ENCODE measurements at regions of chr6 and their contacts with region 1.

Region 1: DNA sequence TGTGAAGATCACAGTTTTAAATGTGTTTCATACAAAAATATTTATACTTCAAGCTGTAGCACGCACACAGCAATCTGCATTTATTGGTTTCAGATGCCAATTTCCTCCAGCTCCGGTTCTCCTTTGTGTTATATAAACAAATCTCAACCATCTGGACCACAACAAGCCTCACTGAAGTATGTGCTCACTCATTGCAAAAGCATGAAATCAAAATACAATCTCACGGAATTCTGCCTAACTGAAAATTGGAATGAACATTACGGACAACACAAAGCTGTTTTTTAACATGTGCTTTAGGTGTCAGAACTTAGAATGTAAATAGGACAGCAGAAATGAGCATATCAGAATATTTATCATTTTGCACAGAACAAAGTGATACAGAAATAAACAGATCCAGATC is 38.0 kb downstream of the RCAN2 start:
- DNase-seq: no peak
- ATAC-seq: no peak
- H3K4me3 ChIP-seq: no peak overlapping the region
- H3K4me3 Mint-ChIP-seq: no peak overlapping the region
- H3K27ac ChIP-seq: no peak overlapping the region
- H3K27ac Mint-ChIP-seq: no peak overlapping the region
- H3K4me1 ChIP-seq: no peaks in the 10 kb centered on the region
- H3K4me1 Mint-ChIP-seq: no peaks in the 10 kb centered on the region
- H3K27me3 ChIP-seq: no peaks in the 10 kb centered on the region
- H3K27me3 Mint-ChIP-seq: peaks cover 16% of the 10 kb centered on the region
- CTCF ChIP-seq: no peak

Region 2: DNA sequence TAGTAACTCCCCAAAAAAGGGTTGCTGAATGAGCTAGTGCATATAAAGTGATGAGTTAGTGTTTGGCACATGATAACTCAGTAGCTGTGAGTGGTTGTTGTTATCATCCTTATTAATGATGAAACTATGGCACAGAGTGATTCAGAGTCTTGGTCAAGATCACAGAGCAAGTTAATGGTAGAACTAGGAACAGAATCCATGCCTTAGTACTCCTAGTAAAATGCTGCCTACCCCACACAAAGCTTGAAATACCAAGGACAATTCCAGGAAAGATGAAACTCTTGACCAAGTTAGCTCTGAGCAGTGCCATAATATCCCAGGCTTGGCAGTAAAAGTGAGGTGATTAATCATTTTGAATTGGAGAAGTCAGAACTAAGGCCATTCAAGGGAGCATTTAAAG is 173.3 kb before region 1 on chr6:
- CTCF ChIA-PET with region 1: no interaction called
- POLR2A ChIA-PET with region 1: no interaction called
- intact Hi-C with region 1: no loop called
- DNase-seq: no peak
- ATAC-seq: no peak
- H3K4me3 ChIP-seq: no peak overlapping the region
- H3K4me3 Mint-ChIP-seq: no peak overlapping the region
- H3K27ac ChIP-seq: no peak overlapping the region
- H3K27ac Mint-ChIP-seq: no peak overlapping the region
- H3K4me1 ChIP-seq: no peaks in the 10 kb centered on the region
- H3K4me1 Mint-ChIP-seq: no peaks in the 10 kb centered on the region
- H3K27me3 ChIP-seq: no peaks in the 10 kb centered on the region
- H3K27me3 Mint-ChIP-seq: peaks cover 10% of the 10 kb centered on the region
- CTCF ChIP-seq: no peak

Region 3: DNA sequence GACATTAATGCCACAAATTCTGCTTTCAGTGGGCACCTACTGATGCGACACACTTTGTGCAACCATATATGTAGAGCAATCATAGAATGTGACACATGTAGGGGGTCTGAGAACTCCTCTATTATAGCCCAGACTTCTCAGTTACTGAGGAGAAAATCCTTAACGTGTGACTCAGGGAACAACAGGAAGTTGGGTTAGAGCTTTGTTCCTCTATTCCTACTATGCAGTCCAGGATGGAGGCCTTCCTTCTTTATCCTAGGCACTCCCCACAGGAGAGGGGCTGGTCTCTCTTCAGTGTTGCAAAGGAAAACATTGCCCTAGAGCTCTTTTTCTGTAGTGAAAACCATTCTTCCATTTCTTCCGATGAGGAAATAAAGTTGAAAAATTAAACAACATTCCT is 77.7 kb after region 1 on chr6:
- CTCF ChIA-PET with region 1: no interaction called
- POLR2A ChIA-PET with region 1: no interaction called
- intact Hi-C with region 1: no loop called
- DNase-seq: no peak
- ATAC-seq: no peak
- H3K4me3 ChIP-seq: no peak overlapping the region
- H3K4me3 Mint-ChIP-seq: no peak overlapping the region
- H3K27ac ChIP-seq: no peak overlapping the region
- H3K27ac Mint-ChIP-seq: no peak overlapping the region
- H3K4me1 ChIP-seq: no peaks in the 10 kb centered on the region
- H3K4me1 Mint-ChIP-seq: no peaks in the 10 kb centered on the region
- H3K27me3 ChIP-seq: peaks cover 0 to 3% of the 10 kb centered on the region in 2 experiments
- H3K27me3 Mint-ChIP-seq: peaks cover 23% of the 10 kb centered on the region
- CTCF ChIP-seq: no peak

Region 4: GRCh38 chr6:46684771-46685170 is 231.6 kb after region 1 on chr6:
- CTCF ChIA-PET with region 1: no interaction called
- POLR2A ChIA-PET with region 1: no interaction called
- intact Hi-C with region 1: loop called in 1 of 2 experiments (anchors 5 kb)
- DNase-seq: no peak
- ATAC-seq: no peak
- H3K4me3 ChIP-seq: no peak overlapping the region
- H3K4me3 Mint-ChIP-seq: no peak overlapping the region
- H3K27ac ChIP-seq: no peak overlapping the region
- H3K27ac Mint-ChIP-seq: no peak overlapping the region
- H3K4me1 ChIP-seq: no peaks in the 10 kb centered on the region
- H3K4me1 Mint-ChIP-seq: no peaks in the 10 kb centered on the region
- H3K27me3 ChIP-seq: no peaks in the 10 kb centered on the region
- H3K27me3 Mint-ChIP-seq: peaks cover 6% of the 10 kb centered on the region
- CTCF ChIP-seq: no peak

Measured in CD8-positive, alpha-beta T cell (primary cell).